Activated naive CD4-positive, alpha-beta T cell treated with anti-CD3 and anti-CD28 coated beads for 36 hours (primary cell): ENCODE measurements at regions of chr10 and their contacts with region 1.

Region 1: DNA sequence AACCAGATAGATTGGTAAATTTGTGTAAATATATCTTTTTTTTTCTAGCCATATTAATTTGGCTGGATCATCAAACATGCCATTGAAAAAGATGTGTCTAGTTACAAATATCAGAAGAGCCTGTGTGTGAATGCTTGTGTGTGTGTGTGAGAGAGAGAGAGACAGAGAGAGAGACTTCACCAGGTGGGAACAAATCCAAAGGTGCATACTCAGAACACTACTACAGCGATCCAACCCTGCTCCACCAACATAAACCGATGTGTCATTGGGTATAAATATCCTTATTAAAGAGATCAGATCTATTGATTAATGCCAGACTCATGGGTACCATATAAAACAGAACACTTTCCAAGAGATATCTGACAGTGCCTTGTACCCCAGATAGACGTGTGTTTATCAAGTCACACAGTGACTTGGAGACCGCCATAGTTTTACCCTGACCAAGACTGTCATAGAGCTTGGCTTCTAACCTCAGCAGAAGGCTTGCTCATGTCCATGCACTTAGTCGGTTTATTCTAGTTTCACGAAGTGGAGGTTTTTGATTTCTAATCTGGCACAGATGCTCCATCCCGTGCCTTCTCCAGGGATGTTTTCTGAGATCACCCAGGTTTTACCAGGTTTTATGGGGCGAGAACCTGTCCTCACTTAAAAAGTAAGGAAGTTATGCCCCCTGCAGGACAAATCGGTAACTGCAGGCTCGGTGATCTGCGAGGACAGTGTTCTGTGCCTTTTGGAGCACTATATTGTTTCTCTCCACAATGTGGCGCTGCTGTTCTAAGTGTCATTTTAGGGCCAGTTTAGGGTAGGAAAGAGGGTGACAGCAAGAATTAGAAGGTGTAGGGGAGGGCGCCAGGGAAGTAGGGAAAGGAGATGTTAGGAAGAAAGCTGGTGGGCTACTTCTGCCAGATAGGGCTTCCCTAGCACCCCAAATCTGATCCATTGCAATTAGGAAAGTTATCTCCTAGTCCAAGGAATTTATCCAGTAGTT is 29.3 kb upstream of the WNT8B start:
- DNase-seq: peak; percentile 99
- H3K4me3 Mint-ChIP-seq: no peak overlapping the region
- H3K27ac Mint-ChIP-seq: no peak overlapping the region
- H3K4me1 Mint-ChIP-seq: no peaks in the 10 kb centered on the region
- H3K27me3 Mint-ChIP-seq: no peaks in the 10 kb centered on the region

Region 2: GRCh38 chr10:100303724-100304319 is 129.7 kb before region 1 on chr10:
- CTCF ChIA-PET with region 1: no interaction called
- intact Hi-C with region 1: loop called (anchors 1 kb)
- DNase-seq: no peak
- H3K4me3 Mint-ChIP-seq: no peak overlapping the region
- H3K27ac Mint-ChIP-seq: no peak overlapping the region
- H3K4me1 Mint-ChIP-seq: no peaks in the 10 kb centered on the region
- H3K27me3 Mint-ChIP-seq: peaks cover 25% of the 10 kb centered on the region

Region 3: GRCh38 chr10:100346765-100347567 is 86.6 kb before region 1 on chr10 and contains the start of gene SCD:
- CTCF ChIA-PET with region 1: interaction called, 276 read pairs
- intact Hi-C with region 1: loop called (anchors 1 kb)
- DNase-seq: peak; percentile 95
- H3K4me3 Mint-ChIP-seq: peak within 1 kb of the TSS; percentile 97
- H3K27ac Mint-ChIP-seq: peak within 1 kb of the TSS; percentile 87
- H3K4me1 Mint-ChIP-seq: peaks cover 45% of the 10 kb centered on the region
- H3K27me3 Mint-ChIP-seq: no peaks in the 10 kb centered on the region
- total RNA-seq, gene SCD: 161 to 169 TPM

Region 4: DNA sequence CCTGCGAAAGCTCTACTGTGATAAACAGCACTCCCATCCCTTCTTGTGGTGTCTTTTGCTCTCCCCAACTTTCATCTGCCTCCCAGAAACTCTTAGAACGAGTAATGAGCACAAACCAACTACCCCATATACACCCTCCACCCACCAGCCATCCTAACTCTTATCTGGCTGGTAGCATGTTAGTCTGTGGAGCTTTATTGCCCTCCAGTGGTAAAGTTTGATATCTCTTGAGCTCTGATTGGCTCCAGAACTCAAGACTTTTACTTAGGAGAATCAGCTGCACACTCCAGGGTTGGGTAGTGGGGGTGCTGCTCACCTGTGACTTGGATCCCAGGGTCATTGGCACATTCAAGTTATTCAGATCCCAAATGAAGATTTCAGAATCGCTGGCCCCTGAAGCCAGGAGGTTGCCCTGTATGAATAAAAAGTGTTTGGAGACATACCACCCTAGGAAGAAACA is 75.2 kb after region 1 on chr10:
- CTCF ChIA-PET with region 1: interaction called, 73 read pairs
- intact Hi-C with region 1: loop called (anchors 1 kb)
- DNase-seq: peak; percentile 68
- H3K4me3 Mint-ChIP-seq: peak overlapping the region; percentile 50
- H3K27ac Mint-ChIP-seq: peak overlapping the region; percentile 89
- H3K4me1 Mint-ChIP-seq: peaks cover 70% of the 10 kb centered on the region
- H3K27me3 Mint-ChIP-seq: no peaks in the 10 kb centered on the region

Region 5: GRCh38 chr10:100743626-100744135 is 310.1 kb after region 1 on chr10:
- CTCF ChIA-PET with region 1: no interaction called
- intact Hi-C with region 1: loop called (anchors 10 kb)
- DNase-seq: peak; percentile 67
- H3K4me3 Mint-ChIP-seq: no peak overlapping the region
- H3K27ac Mint-ChIP-seq: no peak overlapping the region
- H3K4me1 Mint-ChIP-seq: peaks cover 40% of the 10 kb centered on the region
- H3K27me3 Mint-ChIP-seq: peaks cover 83% of the 10 kb centered on the region